PC-9 (cell line): ENCODE measurements at regions of chr2 and their contacts with region 1.

Region 1: DNA sequence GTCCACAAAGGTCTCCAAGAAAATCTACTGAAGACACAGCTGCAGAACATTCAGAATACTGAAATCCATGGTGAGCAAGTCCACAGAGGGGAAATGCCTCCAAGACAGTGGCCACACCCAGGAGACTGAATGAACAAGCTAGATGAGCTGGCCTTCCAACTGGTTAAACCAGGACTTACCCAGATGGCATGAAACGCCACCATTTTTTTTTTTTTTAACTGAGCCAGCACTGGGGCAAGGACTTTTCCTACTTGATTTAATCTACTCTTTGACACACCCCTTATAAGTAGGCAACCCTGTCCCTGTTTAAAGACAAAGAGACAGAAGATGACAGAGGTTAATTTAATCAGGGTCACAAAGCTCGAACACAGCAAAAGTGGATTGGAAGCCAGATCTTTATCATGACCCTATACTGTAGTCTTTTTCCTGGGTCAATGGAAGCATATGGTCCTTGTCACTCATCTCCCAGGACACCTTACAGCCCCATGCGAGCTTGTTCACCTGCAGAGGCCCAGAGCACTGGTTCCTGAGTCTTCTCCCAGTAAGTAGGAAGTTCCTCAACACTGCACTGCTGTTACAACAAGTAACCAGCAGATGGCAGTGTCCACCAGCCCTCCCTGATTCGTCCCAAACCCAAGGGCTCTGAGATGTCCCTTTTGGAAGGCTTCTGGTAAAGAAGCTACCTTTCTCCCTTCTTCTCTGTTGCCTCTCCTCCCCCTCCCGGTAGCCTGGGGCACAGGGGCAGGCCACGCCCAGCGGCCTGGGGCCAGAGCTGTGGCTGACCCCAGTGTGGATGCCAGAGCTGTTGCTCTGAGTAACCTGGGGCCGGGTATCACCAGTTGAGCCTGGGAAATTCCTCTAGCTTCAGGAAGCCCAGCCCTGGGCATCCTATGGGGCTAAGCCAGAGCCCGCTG is 5.6 kb upstream of the GDF7 start:
- DNase-seq: peak; percentile 66 to 82
- H3K4me3 ChIP-seq: no peak overlapping the region
- H3K27ac ChIP-seq: no peak overlapping the region
- H3K4me1 ChIP-seq: peaks cover 15% of the 10 kb centered on the region
- H3K27me3 ChIP-seq: 0 out of 2 replicates have a peak, but pooled peaks cover 14% of the 10 kb centered on the region
- CTCF ChIP-seq: peak; percentile 98

Region 2: GRCh38 chr2:20822535-20823490 is 161.5 kb after region 1 on chr2 and contains the start of gene LDAH:
- CTCF ChIA-PET with region 1: interaction called, 3 read pairs
- POLR2A ChIA-PET with region 1: no interaction called
- intact Hi-C with region 1: loop called (anchors 1 kb)
- DNase-seq: peak; percentile 64 to 82
- H3K4me3 ChIP-seq: peak within 1 kb of the TSS; percentile 86
- H3K27ac ChIP-seq: peak within 1 kb of the TSS; percentile 82
- H3K4me1 ChIP-seq: peaks cover 8% of the 10 kb centered on the region
- H3K27me3 ChIP-seq: no peaks in the 10 kb centered on the region
- CTCF ChIP-seq: no peak
- total RNA-seq, gene LDAH: 14.6 and 18.3 TPM in 2 replicates

Region 3: DNA sequence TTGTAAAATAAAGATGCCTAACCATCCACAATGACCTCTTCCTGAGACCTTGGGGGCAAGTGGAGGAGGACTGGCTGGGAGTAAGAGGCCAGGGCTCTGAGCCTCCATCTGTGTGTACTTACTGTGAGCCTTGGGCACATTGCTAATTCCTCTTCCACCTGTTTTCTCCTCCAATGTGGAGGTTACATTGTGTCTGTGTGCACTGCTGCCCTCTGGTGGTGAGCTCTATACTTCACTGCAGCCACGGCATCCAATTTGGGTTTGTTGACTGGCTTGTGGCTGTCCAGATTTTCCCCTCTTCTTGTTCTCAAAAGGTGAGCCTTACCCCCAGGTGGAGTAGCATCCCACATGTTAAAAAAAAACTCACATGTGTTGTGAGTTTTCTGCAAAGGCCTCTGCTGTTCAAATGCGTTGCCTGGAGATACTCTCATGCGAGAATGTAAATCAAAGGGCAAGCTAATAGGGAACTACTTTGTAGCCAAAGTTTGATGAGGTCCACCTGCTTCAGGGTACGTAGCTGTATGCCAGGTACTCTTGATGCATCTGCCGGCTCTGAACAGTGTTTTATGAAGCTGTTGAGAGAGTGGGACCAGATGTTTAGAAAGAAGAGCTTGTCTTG is 301.7 kb after region 1 on chr2:
- CTCF ChIA-PET with region 1: interaction called, 18 read pairs
- POLR2A ChIA-PET with region 1: no interaction called
- intact Hi-C with region 1: loop called (anchors 1 kb)
- DNase-seq: peak; percentile 57 to 59
- H3K4me3 ChIP-seq: no peak overlapping the region
- H3K27ac ChIP-seq: no peak overlapping the region
- H3K4me1 ChIP-seq: no peaks in the 10 kb centered on the region
- H3K27me3 ChIP-seq: peaks cover 88% of the 10 kb centered on the region
- CTCF ChIP-seq: peak; percentile 92

Region 4: GRCh38 chr2:21025690-21026478 is 364.6 kb after region 1 on chr2:
- CTCF ChIA-PET with region 1: no interaction called
- POLR2A ChIA-PET with region 1: no interaction called
- intact Hi-C with region 1: loop called (anchors 2 kb)
- DNase-seq: no peak
- H3K4me3 ChIP-seq: no peak overlapping the region
- H3K27ac ChIP-seq: no peak overlapping the region
- H3K4me1 ChIP-seq: no peaks in the 10 kb centered on the region
- H3K27me3 ChIP-seq: peaks cover 36% of the 10 kb centered on the region; the same call in 1 of the 2 replicates
- CTCF ChIP-seq: no peak

Region 5: GRCh38 chr2:21118302-21118920 is 457.1 kb after region 1 on chr2:
- CTCF ChIA-PET with region 1: no interaction called
- POLR2A ChIA-PET with region 1: no interaction called
- intact Hi-C with region 1: loop called (anchors 1 kb)
- DNase-seq: peak in 1 of 2 experiments; percentile 15
- H3K4me3 ChIP-seq: no peak overlapping the region
- H3K27ac ChIP-seq: no peak overlapping the region
- H3K4me1 ChIP-seq: no peaks in the 10 kb centered on the region
- H3K27me3 ChIP-seq: no peaks in the 10 kb centered on the region
- CTCF ChIP-seq: peak; percentile 61

Region 6: DNA sequence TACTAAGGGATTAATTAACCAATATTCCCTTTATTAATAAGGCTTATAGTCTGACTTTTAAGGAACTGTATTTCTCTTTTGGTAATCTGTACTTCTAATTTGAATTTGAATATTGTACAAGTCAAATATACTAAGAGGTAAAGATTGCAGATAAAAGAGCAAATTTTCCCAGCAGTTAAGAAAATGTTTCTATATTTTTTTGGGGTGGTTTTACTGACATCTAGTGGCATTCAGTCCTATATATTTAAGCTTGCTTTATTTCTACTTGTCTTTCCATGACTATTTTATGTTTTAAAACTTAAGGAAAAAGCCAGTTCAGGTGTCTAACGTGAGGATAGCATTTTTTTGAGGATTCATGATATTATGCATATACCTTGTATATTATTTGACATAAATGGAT is 504.0 kb after region 1 on chr2:
- CTCF ChIA-PET with region 1: no interaction called
- POLR2A ChIA-PET with region 1: no interaction called
- intact Hi-C with region 1: loop called (anchors 5 kb)
- DNase-seq: no peak
- H3K4me3 ChIP-seq: no peak overlapping the region
- H3K27ac ChIP-seq: no peak overlapping the region
- H3K4me1 ChIP-seq: no peaks in the 10 kb centered on the region
- H3K27me3 ChIP-seq: no peaks in the 10 kb centered on the region
- CTCF ChIP-seq: peak; percentile 52